ENCODE measurements at regions of chr11 and their contacts with region 1.

Region 1: GRCh38 chr11:22787551-22788162 is 41.9 kb downstream of the SVIP start:
- DNase-seq: peak in 1 of 2 experiments; percentile 12
- H3K4me3 ChIP-seq: no peak overlapping the region
- H3K27ac ChIP-seq: no peak overlapping the region
- H3K4me1 ChIP-seq: 0 out of 2 replicates have a peak, but pooled peaks cover 4% of the 10 kb centered on the region
- H3K27me3 ChIP-seq: peaks cover 3% of the 10 kb centered on the region; the same call in 1 of the 2 replicates
- CTCF ChIP-seq: peak; percentile 80

Region 2: DNA sequence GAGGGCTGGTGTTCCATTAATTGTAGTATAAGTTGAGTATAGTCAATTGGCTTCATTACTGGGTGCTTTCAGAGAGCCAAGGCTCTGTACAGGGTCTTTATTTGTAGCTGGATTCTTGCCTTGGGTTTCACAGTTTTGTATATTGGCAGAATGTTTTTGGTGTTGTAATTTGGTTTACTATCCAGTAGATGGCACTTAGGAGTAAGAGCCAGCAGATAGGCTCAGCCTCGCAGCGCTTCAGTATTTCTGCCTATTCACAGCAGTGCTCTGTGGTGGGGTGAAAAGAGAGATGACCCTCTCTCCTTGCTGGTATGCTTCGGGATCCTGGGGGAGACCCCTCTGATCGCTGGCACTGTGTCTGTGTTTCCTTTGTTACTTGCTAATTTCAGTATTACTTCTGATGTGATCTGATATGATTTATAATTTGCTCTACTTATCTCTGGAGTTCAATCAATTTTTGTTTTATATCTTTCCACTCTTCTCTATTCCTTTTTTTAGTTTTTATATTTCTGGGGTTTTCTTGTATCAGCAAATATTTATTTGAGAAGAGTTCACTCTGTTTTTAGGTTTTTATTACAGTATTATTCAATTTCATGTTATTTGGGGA is 542.6 kb before region 1 on chr11:
- CTCF ChIA-PET with region 1: interaction called, 3 read pairs
- POLR2A ChIA-PET with region 1: no interaction called
- intact Hi-C with region 1: loop called (anchors 1 kb)
- DNase-seq: peak in 1 of 2 experiments; percentile 5
- H3K4me3 ChIP-seq: no peak overlapping the region
- H3K27ac ChIP-seq: no peak overlapping the region
- H3K4me1 ChIP-seq: no peaks in the 10 kb centered on the region
- H3K27me3 ChIP-seq: no peaks in the 10 kb centered on the region
- CTCF ChIP-seq: peak; percentile 65

Region 3: DNA sequence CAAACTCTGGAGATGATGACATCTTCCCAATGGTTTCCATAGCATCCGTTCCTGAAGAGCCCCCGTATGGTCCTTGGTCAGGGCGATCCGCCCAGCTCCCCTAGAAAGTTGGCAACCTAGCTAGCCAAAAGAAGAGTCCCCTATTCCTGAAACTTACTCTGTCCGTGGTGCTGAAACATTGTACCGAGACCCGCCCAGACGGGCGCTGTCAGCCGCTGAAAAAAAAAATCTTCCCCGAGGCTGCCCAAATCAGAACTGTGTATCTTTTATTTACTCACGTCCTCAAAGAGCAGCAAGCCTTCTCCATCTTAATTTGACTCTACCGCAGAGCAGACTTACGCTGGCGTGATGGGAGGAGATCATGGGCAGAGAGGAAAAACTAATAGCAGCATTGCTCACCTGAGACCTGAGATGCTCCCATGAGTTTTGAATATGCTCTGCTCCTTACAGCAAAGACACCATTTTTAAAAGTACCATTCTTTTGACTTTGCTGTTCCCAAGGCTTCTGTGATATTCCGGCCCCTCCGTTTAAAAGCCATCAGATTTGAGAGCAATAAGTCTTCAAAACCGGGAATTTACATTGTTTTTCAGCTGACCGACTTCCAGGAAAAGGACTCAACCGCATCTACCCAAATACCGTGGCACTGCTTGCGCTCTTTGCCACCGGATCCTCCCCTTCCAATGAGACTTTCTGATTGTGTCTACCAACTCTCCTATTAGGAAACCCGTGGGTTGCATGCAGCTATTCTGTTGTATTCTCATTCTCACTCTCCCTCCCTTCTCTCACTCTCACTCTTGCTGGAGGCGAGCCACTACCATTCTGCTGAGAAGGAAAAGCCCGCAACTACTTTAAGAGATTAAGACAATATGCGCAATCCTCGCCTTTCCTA is 449.8 kb before region 1 on chr11 and contains the start of gene SLC17A6:
- CTCF ChIA-PET with region 1: no interaction called
- POLR2A ChIA-PET with region 1: no interaction called
- intact Hi-C with region 1: loop called (anchors 1 kb)
- DNase-seq: no peak
- H3K4me3 ChIP-seq: no peak within 1 kb of the TSS
- H3K27ac ChIP-seq: no peak within 1 kb of the TSS
- H3K4me1 ChIP-seq: no peaks in the 10 kb centered on the region
- H3K27me3 ChIP-seq: peaks cover 35% of the 10 kb centered on the region
- CTCF ChIP-seq: no peak
- total RNA-seq, gene SLC17A6: not detected in 2 replicates

Region 4: DNA sequence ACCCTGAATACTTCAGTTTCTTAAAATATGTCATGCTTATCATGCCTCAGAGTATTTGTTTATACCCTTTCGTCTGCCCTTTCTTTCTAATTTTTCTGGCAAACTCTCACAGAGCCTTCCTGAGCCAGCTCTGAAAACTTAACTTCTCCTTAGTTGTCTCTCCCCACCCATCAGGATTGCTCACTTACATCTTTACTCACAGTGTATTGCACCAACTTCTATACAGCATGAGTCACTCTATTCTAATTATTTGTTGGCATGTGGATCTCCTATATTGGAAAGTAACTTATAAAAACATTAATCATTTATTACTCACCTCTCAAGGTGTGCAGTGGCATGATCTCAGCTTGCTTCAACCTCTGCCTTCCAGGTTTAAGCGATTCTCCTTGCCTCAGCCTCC is 276.9 kb before region 1 on chr11:
- CTCF ChIA-PET with region 1: no interaction called
- POLR2A ChIA-PET with region 1: no interaction called
- intact Hi-C with region 1: no loop called
- DNase-seq: peak in 1 of 2 experiments; percentile 61
- H3K4me3 ChIP-seq: no peak overlapping the region
- H3K27ac ChIP-seq: no peak overlapping the region
- H3K4me1 ChIP-seq: peaks cover 11% of the 10 kb centered on the region; the same call in 1 of the 2 replicates
- H3K27me3 ChIP-seq: no peaks in the 10 kb centered on the region
- CTCF ChIP-seq: no peak

Region 5: GRCh38 chr11:22625448-22626287 is 162.0 kb before region 1 on chr11 and contains the start of gene FANCF:
- CTCF ChIA-PET with region 1: no interaction called
- POLR2A ChIA-PET with region 1: no interaction called
- intact Hi-C with region 1: loop called (anchors 5 kb)
- DNase-seq: peak; percentile 93
- H3K4me3 ChIP-seq: peak within 1 kb of the TSS; percentile 85
- H3K27ac ChIP-seq: peak within 1 kb of the TSS; percentile 77
- H3K4me1 ChIP-seq: peaks cover 15% of the 10 kb centered on the region; the same call in 1 of the 2 replicates
- H3K27me3 ChIP-seq: no peaks in the 10 kb centered on the region
- CTCF ChIP-seq: no peak
- total RNA-seq, gene FANCF: 8.0 and 8.3 TPM in 2 replicates

Region 6: GRCh38 chr11:22670830-22671229 is 116.8 kb before region 1 on chr11:
- CTCF ChIA-PET with region 1: no interaction called
- POLR2A ChIA-PET with region 1: no interaction called
- intact Hi-C with region 1: loop called (anchors 2 kb)
- DNase-seq: no peak
- H3K4me3 ChIP-seq: no peak overlapping the region
- H3K27ac ChIP-seq: no peak overlapping the region
- H3K4me1 ChIP-seq: no peaks in the 10 kb centered on the region
- H3K27me3 ChIP-seq: peaks cover 4% of the 10 kb centered on the region; the same call in 1 of the 2 replicates
- CTCF ChIP-seq: peak; percentile 35; the same call in 1 of the 2 replicates

Region 7: DNA sequence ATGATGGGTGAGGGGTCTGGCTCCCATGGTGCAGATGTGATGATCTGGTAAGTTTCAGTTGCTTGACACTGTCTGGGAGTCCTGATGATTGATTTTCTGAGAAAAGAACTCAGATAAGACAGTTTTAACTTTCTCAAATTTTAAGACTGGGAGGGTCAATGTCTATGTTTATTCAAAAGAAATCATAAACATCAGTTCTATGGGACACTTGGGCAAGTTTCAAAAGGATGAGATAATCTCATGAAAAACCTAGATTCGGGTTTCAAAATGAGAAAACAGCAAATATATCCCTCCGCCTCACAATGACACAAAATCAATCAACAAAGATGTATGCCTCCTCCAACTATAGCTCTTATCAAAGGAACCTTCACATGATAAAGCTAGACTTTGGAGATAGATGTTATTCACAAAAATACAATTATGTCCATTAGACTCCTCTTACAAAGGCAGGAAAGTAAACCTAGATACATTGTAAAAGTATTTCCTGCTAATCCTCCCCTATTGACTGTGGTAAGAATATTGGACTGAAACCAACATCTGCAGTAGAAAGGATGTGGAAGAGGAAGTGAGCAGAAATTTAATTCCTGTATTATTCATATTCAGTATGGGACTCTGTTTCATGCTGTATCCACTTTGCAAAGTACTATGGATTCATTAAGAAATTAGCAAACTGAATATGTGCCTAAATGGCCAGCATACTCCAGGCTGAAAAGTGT is 20.4 kb after region 1 on chr11:
- CTCF ChIA-PET with region 1: no interaction called
- POLR2A ChIA-PET with region 1: no interaction called
- intact Hi-C with region 1: no loop called
- DNase-seq: no peak
- H3K4me3 ChIP-seq: no peak overlapping the region
- H3K27ac ChIP-seq: no peak overlapping the region
- H3K4me1 ChIP-seq: no peaks in the 10 kb centered on the region
- H3K27me3 ChIP-seq: no peaks in the 10 kb centered on the region
- CTCF ChIP-seq: no peak